ENCODE measurements at regions of chr2 and their contacts with region 1.

Region 1: GRCh38 chr2:184654945-184655344 is 56.6 kb downstream of the ZNF804A start:
- DNase-seq: no peak
- H3K4me3 ChIP-seq: no peak overlapping the region
- H3K4me3 Mint-ChIP-seq: no peak overlapping the region
- H3K27ac Mint-ChIP-seq: no peak overlapping the region
- H3K4me1 ChIP-seq: no peaks in the 10 kb centered on the region
- H3K4me1 Mint-ChIP-seq: no peaks in the 10 kb centered on the region
- H3K27me3 ChIP-seq: no peaks in the 10 kb centered on the region
- H3K27me3 Mint-ChIP-seq: no peaks in the 10 kb centered on the region
- CTCF ChIP-seq: no peak

Region 2: DNA sequence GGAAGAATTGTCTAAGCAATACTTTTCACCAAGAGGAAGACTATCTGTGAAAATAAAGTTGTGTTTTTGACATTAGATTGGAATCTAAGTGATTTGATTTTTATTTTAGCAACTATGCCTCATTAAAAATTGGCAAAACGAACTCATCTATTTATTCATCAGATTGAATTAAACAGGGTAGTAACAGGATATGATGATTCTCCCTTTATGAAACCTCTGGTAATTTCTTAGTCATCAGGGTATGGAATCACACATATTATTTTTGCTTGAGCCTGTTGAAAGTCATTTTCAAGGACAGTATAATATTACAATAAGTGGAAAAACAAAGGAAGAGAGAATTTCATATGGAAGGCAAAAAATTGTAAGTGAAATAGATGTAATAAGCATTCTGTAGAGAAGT is 34.6 kb before region 1 on chr2:
- CTCF ChIA-PET with region 1: no interaction called
- POLR2A ChIA-PET with region 1: no interaction called
- intact Hi-C with region 1: loop called (anchors 1 kb)
- DNase-seq: no peak
- H3K4me3 ChIP-seq: no peak overlapping the region
- H3K4me3 Mint-ChIP-seq: no peak overlapping the region
- H3K27ac Mint-ChIP-seq: no peak overlapping the region
- H3K4me1 ChIP-seq: no peaks in the 10 kb centered on the region
- H3K4me1 Mint-ChIP-seq: no peaks in the 10 kb centered on the region
- H3K27me3 ChIP-seq: no peaks in the 10 kb centered on the region
- H3K27me3 Mint-ChIP-seq: no peaks in the 10 kb centered on the region
- CTCF ChIP-seq: no peak